ENCODE measurements at regions of chr6 and their contacts with region 1.

Region 1: GRCh38 chr6:2931970-2932748 is 29.1 kb upstream of the SERPINB9 start:
- DNase-seq: peak; percentile 91

Region 2: GRCh38 chr6:2799936-2800527 is 132.1 kb before region 1 on chr6:
- in situ Hi-C with region 1: no loop called
- DNase-seq: no peak

Region 3: DNA sequence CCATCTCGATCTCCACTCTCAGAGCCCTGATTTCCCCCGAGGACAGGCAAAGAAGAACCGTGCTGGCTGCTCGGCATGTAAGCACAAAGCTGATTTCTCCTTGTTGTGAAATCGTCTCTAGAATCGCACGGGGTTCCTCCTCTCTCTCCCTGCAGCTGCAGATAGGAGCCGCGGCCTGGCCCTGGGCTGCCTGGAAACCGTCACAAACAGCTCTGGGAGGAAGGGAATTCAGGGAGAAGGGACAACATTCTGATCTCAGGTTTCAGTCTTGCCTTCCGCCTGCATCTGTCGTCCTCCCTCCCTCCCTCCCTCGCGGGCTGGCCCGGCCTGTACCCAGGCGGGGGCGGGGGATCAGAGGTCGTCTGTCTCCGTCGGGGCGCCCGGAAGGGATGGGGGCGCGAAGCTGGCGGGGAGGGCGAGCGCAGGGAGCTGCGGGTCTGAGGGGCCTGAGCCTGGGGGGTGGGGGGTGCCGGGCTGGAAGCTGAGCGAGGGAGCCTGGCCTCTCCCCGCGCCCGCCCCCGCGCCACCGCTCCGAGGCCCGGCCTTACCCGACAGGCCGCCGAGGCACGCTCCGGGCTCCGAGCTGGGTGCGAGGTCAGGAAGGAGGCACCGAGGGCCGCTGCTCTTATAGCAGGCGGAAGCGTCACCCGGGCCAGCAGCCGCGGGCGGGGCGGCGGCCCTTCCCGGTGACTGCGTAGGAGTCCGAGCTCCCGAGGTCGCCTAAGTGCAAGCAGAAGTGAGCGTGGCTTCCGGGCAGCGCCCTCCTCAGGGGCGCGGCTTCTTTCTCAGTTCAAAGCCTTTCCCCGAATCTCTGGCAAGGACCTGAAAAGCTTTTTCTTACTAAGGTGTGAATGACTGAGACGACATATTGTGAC is 90.7 kb before region 1 on chr6 and contains the start of gene SERPINB1:
- in situ Hi-C with region 1: loop called (anchors 10 kb)
- DNase-seq: peak; percentile 93

Measured in KBM-7 (cell line).